Posterior cingulate gyrus (tissue), 11 donors: ENCODE measurements at regions of chr18 and their contacts with region 1.

Region 1: GRCh38 chr18:66558773-66559172 is 45.1 kb downstream of the CDH19 start:
- DNase-seq: no peak

Region 2: GRCh38 chr18:66749030-66749429 is 190.3 kb after region 1 on chr18:
- intact Hi-C with region 1: loop called (anchors 10 kb)
- DNase-seq: no peak